Vagina (tissue), 2 donors: ENCODE measurements at regions of chr3 and their contacts with region 1.

Region 1: GRCh38 chr3:185069037-185070030 is 83.5 kb downstream of the C3orf70 start:
- DNase-seq: no peak
- H3K4me3 ChIP-seq: no peak overlapping the region
- H3K27ac ChIP-seq: no peak overlapping the region
- H3K4me1 ChIP-seq: no peaks in the 10 kb centered on the region
- H3K27me3 ChIP-seq: no peaks in the 10 kb centered on the region
- CTCF ChIP-seq: no peak
- POLR2A ChIP-seq: no peak

Region 2: GRCh38 chr3:183114384-183115178 is 1954.8 kb before region 1 on chr3:
- intact Hi-C with region 1: loop called (anchors 5 kb)
- DNase-seq: no peak
- H3K4me3 ChIP-seq: no peak overlapping the region
- H3K27ac ChIP-seq: no peak overlapping the region
- H3K4me1 ChIP-seq: no peaks in the 10 kb centered on the region
- H3K27me3 ChIP-seq: no peaks in the 10 kb centered on the region
- CTCF ChIP-seq: no peak
- POLR2A ChIP-seq: no peak

Region 3: DNA sequence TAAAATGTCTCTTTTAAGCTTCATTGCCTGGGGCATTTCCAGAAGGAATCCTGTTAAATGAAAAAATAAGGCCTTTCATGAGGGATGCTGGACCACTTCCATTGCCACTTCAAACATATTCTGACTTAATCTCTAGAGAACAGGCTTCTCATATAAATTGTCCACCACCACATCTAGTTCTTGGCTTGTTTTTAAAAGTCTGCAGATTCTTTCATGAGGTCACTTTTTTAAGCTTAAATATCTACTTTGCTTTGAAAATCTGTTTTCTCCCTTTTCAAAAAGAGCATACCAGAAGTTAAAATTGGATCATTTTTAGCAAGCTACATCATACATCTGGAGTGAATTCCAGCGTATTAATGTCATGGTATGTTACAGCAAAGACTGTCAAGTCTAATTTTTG is 48.1 kb before region 1 on chr3:
- intact Hi-C with region 1: no loop called
- DNase-seq: no peak
- H3K4me3 ChIP-seq: no peak overlapping the region
- H3K27ac ChIP-seq: no peak overlapping the region
- H3K4me1 ChIP-seq: no peaks in the 10 kb centered on the region
- H3K27me3 ChIP-seq: no peaks in the 10 kb centered on the region
- CTCF ChIP-seq: no peak
- POLR2A ChIP-seq: no peak